Posterior cingulate gyrus (tissue), 11 donors: ENCODE measurements at regions of chr2 and their contacts with region 1.

Region 1: GRCh38 chr2:234881413-234882241 is 70.2 kb upstream of the SH3BP4 start:
- DNase-seq: peak; percentile 73 to 98 (median 86)

Region 2: GRCh38 chr2:234544659-234545611 is 336.7 kb before region 1 on chr2:
- intact Hi-C with region 1: loop called (anchors 10 kb)
- DNase-seq: peak; percentile 34 to 94 (median 72)

Region 3: GRCh38 chr2:234650911-234651310 is 230.7 kb before region 1 on chr2:
- intact Hi-C with region 1: no loop called
- DNase-seq: no peak

Region 4: DNA sequence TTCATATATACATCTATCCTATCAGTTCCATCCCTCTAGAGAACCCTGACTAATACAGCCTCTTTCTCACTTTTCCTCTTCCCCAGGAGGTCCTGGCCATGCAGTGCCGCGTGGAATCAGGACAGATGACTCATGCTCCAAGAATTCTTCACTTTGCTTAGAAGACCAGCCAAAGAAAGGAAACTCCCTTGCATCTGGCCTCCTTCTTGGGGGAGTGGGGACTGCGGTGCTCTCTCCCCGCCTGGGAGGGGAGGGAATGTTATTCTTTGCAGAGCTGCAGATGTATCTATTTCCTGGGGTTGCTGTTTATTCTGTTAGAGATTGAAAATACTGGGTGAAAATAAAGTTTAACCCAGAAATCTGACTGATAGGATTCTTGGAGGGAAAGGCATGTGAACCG is 41.3 kb before region 1 on chr2:
- intact Hi-C with region 1: no loop called
- DNase-seq: peak in 2 of 10 donors; percentile 11 to 84

Region 5: DNA sequence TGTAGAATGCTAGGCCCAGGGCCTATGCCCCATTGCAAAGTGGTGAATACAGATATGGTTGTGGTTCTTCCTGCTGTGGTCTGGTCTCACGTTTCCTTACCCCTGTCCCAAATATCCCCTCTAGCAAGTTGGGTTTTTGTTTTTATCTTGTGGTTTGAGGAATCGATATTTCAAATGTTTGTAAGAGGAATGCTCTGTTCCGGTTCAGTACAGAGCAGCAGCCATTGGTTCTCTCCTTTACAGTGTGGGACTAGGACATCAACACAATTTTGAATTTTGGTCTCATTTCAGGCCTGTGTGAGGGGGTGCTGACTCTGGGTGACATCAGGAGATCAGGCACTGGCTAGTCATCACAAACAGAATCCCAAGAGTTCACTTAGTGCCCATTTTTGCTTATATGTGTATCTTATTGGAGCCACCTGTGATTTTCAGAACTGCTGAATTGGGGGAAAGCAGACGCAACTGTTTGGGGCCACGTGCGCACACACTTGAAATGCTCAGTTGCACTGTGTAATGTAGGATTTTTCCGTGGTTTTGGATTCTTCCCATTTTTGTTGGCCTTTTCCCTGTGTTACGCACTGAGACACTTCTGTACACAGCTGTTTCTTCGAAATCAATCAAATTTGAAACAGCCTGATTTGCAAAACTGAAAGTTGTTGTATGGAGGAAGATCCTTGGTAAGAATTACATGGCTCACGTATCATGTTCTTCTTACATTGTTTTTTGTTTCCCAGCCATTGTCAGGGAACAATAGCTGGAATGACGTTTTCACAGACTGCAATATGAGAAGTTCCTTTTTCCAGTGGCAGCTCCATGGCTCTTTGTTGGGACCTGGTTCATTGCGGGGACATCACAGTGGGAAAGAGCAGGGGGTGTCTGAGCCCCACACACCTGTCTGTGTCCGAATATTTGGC is 78.8 kb after region 1 on chr2:
- intact Hi-C with region 1: loop called (anchors 2 kb)
- DNase-seq: peak in 1 of 10 donors; percentile 33

Region 6: DNA sequence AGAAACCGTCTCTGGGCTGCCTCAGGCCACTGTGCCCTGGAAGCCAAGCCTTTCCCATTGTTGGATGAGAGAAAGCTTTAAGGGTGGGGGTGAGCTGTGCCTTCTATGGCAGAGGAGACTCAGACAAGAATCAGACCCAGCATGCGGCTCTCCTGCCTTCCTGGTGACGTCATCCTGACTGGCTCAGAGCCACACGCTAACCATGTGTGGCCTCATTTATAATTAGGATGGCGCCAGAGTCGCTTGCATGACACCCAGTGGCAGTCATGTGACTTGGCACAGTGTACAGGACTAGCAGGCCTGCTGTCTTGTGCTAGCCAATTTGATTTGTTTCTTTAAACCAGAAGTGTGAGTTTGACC is 169.3 kb after region 1 on chr2:
- intact Hi-C with region 1: loop called (anchors 5 kb)
- DNase-seq: peak; percentile 58 to 97 (median 88)

Region 7: DNA sequence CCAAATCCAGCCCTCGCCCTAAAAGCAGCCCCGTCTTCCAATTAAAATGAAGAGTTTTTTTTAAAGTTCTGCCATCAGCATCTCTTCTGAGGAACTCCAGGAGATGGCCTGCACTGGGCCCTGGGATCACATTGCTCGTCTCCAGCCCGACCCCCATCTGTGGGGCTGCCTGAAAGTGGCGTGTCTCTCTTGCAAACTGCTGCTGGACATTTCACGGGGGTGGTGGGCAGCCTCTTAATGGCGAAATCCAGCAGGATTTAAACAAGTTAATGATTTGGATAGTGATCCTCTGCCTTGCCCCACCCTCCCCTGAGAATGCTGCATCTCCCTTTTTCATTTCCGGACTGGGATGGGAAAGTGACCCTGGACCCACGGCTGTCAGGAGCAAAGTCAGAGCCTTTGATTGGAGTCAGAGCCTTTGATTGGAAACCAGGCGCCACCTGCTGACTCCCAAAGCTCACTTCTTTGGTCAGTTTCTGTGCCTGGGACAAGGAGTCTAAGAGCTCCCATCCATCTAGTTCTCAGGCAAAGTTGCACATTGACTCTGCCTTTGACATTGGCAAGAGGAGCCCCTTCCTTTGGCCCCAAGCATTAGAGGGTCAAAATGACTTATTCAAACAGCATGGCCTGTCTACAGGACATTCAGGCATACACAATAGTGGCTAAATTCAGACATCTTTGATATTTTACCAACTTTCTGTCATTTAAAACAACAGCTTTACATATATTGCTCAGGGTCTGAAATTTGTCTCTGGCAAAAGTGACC is 225.4 kb after region 1 on chr2:
- intact Hi-C with region 1: loop called (anchors 5 kb)
- DNase-seq: peak in 9 of 10 donors; percentile 34 to 95 (median 76)